ENCODE measurements at regions of chr1 and their contacts with region 1.

Region 1: DNA sequence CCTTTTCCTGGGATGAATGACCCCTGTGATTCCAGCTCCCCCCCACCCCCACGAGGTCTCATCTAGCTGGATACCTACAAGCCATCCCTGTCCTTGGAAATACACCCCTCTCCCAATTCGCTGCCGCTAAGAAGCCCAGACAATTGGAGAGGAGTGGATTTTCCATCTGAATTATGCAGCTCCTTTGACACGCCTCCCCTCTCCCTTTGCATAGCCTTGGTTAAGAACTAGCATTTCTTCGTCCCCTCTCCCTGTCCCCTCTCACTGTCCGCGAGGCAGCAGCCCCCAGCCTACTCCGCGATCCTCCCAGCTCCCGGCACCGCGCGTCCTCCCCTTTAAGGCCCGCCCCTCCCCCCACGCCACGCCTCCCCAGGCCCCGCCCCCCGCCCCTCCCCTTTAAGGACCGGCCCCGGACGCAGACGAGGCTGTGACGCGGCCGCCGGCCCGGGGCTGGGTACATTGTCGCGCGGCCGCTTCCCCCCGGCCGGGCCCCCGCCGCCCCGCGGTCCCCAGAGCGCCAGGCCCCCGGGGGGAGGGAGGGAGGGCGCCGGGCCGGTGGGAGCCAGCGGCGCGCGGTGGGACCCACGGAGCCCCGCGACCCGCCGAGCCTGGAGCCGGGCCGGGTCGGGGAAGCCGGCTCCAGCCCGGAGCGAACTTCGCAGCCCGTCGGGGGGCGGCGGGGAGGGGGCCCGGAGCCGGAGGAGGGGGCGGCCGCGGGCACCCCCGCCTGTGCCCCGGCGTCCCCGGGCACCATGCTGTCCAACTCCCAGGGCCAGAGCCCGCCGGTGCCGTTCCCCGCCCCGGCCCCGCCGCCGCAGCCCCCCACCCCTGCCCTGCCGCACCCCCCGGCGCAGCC is at the start of gene MAPKAPK2:
- DNase-seq: no peak
- ATAC-seq: peak; percentile 63
- H3K4me3 ChIP-seq: peak within 1 kb of the TSS; percentile 66 to 91 (median 88)
- H3K27ac ChIP-seq: peak within 1 kb of the TSS; percentile 84
- H3K4me1 ChIP-seq: peaks cover 80% of the 10 kb centered on the region
- H3K27me3 ChIP-seq: peaks cover 2 to 10% of the 10 kb centered on the region in 2 experiments; a peak in 3 of 5 replicates
- CTCF ChIP-seq: no peak
- EP300 ChIP-seq: no peak
- POLR2A ChIP-seq: peak in 1 of 2 experiments; percentile 61; a peak in 1 of 4 replicates
- RAD21 ChIP-seq: no peak
- total RNA-seq, gene MAPKAPK2: 14.5 and 16.6 TPM in 2 replicates

Region 2: GRCh38 chr1:206583707-206584648 is 100.7 kb before region 1 on chr1:
- CTCF ChIA-PET with region 1: no interaction called
- POLR2A ChIA-PET with region 1: no interaction called
- in situ Hi-C with region 1: no loop called
- intact Hi-C with region 1: no loop called
- DNase-seq: peak; percentile 55
- ATAC-seq: peak; percentile 87
- H3K4me3 ChIP-seq: no peak overlapping the region
- H3K27ac ChIP-seq: no peak overlapping the region
- H3K4me1 ChIP-seq: no peaks in the 10 kb centered on the region
- H3K27me3 ChIP-seq: no peaks in the 10 kb centered on the region
- CTCF ChIP-seq: peak; percentile 87
- EP300 ChIP-seq: no peak
- POLR2A ChIP-seq: no peak
- RAD21 ChIP-seq: peak; percentile 71

Region 3: DNA sequence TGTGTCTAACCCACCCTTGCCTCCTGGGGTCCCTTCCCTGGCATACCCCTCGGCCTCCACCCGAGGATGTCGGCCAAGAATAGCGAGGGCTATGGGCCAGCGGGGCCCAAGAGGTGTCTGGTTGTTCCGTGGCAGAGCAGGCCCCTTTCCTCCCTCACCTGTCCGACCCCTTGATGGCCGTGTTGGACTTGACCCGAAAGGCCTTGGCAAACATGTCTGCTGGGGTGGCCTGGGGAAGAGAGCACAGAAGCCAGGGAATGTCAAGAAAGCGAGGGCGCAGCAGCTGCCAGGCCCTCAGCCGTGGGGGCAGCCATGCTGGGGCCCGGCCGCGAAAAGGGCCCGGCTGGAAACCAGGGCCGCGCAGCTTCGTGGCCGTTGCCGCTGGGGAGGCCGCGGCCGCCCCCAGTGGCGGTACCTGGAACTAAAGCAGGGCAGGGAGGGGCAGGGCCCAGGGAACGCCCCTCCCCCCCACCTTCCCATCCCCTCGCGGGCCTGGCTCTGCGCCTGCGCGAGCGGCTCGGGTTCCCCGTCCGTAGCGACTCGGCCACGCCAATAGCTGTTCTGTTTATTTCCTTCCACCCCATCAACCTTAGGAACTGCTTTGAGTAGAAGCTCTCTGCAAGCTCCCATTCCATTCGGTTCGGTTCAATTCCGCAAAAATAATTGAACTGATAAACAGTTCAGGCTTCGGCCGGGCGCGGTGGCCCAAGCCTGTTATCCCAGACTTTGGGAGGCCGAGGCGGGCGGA is 72.4 kb before region 1 on chr1 and contains the start of gene EIF2D:
- CTCF ChIA-PET with region 1: no interaction called
- POLR2A ChIA-PET with region 1: interaction called, 3 read pairs
- in situ Hi-C with region 1: no loop called
- intact Hi-C with region 1: loop called (anchors 5 kb)
- DNase-seq: peak; percentile 85
- ATAC-seq: peak; percentile 97
- H3K4me3 ChIP-seq: peak within 1 kb of the TSS; percentile 85 to 88 (median 88)
- H3K27ac ChIP-seq: peak within 1 kb of the TSS; percentile 93
- H3K4me1 ChIP-seq: peaks cover 10% of the 10 kb centered on the region
- H3K27me3 ChIP-seq: no peaks in the 10 kb centered on the region
- CTCF ChIP-seq: peak; percentile 94
- EP300 ChIP-seq: peak; percentile 58 to 62; a peak in 2 of 4 replicates
- POLR2A ChIP-seq: peak; percentile 88 to 96
- RAD21 ChIP-seq: peak; percentile 73
- total RNA-seq, gene EIF2D: 45.1 and 47.5 TPM in 2 replicates

Measured in HepG2 (cell line).